ENCODE measurements at regions of chr9 and their contacts with region 1.

Region 1: DNA sequence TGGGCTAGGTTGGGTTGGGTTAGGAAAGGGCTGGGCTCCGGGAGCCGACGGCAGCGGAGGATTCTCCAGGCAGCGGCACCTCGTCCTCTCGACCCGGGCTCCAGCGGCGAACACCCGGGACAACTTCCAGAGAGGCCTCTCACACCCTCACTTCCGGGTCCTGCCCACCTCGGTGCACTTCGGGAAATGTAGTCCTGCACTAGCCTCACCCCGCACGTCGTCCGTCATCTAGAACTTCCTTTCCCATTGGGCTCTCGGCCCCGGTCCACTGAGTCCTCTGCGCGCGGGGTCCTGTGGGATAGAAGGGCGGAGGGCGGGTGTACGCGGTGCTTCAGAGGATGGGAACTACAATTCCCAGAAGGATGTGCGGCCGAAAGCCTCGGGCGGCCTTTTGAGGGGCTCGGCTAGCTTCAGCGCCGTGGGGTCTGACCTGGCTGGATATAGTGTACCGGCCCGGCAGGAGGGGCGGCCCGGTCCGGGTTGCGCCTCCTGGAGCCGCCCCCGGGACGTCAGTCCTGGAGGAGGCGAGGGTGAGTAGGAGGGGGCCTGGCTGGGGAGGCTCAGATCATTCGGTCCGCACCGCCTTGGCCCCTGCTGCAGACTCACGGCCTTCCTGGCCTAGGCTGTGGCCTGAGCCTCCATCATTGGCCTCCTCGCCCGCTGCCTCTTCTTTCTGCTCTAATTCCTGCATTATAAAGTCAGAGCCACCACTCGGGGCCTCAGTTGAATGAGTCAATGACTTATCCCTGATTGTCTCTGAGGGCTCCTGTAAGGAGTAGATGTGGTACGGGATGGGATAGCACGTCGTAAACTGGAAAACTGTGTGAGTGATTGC is at the starts of genes ERP44 and INVS:
- DNase-seq: peak; percentile 98
- H3K4me3 Mint-ChIP-seq: peak within 1 kb of the TSS; percentile 98
- H3K27ac Mint-ChIP-seq: peak within 1 kb of the TSS; percentile 83
- H3K4me1 Mint-ChIP-seq: peaks cover 32% of the 10 kb centered on the region
- H3K27me3 Mint-ChIP-seq: no peaks in the 10 kb centered on the region
- total RNA-seq, gene ERP44: 14.5 to 14.8 TPM
- total RNA-seq, gene INVS: 10.5 to 12.1 TPM

Region 2: DNA sequence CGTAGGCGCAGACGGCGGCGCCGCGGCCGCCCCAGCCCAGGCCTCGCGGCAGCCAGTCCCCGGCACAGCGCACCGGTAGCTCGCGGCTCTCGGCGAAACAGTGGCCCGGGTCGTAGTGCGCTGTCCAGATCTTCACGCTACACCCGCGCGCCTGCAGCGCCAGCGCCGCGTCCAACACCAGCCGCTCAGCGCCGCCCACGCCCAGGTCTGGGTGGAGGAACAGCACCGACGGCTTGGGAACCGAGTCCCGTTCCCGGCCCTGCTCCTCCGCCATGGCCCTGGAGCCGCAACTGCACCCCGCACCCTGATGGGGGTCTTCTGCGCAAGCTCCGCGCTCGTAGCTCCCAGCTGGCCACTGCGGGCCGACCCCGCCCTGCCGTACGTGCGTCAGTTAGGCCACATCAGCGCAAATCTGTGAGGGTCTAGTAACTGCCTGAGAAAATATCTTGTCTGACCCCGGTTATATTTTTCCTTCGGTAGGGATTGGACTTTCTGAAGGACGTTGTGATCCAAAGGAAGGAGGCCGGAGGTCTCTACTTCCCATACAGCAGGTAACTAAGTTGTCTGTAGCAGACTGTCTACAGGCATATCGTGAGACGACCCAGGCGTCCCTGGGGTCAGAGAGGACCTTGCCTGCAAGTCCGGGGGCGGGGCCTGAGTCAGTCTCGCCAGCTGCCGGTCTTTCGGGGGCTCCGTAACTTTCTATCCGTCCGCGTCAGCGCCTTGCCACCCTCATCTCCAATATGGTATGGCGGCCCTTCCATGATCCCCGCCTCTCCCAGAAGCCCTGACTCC is 877.3 kb before region 1 on chr9 and contains the starts of genes ALG2 and SEC61B:
- CTCF ChIA-PET with region 1: no interaction called
- POLR2A ChIA-PET with region 1: no interaction called
- intact Hi-C with region 1: loop called (anchors 1 kb)
- DNase-seq: peak; percentile 94
- H3K4me3 Mint-ChIP-seq: peak within 1 kb of the TSS; percentile 97
- H3K27ac Mint-ChIP-seq: peak within 1 kb of the TSS; percentile 95
- H3K4me1 Mint-ChIP-seq: peaks cover 66% of the 10 kb centered on the region
- H3K27me3 Mint-ChIP-seq: no peaks in the 10 kb centered on the region
- total RNA-seq, gene ALG2: 18.6 to 20.8 TPM
- total RNA-seq, gene SEC61B: 161 to 166 TPM

Region 3: GRCh38 chr9:99807276-99807852 is 291.7 kb before region 1 on chr9:
- CTCF ChIA-PET with region 1: no interaction called
- POLR2A ChIA-PET with region 1: no interaction called
- intact Hi-C with region 1: no loop called
- DNase-seq: peak; percentile 69
- H3K4me3 Mint-ChIP-seq: no peak overlapping the region
- H3K27ac Mint-ChIP-seq: no peak overlapping the region
- H3K4me1 Mint-ChIP-seq: peaks cover 25% of the 10 kb centered on the region
- H3K27me3 Mint-ChIP-seq: peaks cover 6% of the 10 kb centered on the region

Region 4: DNA sequence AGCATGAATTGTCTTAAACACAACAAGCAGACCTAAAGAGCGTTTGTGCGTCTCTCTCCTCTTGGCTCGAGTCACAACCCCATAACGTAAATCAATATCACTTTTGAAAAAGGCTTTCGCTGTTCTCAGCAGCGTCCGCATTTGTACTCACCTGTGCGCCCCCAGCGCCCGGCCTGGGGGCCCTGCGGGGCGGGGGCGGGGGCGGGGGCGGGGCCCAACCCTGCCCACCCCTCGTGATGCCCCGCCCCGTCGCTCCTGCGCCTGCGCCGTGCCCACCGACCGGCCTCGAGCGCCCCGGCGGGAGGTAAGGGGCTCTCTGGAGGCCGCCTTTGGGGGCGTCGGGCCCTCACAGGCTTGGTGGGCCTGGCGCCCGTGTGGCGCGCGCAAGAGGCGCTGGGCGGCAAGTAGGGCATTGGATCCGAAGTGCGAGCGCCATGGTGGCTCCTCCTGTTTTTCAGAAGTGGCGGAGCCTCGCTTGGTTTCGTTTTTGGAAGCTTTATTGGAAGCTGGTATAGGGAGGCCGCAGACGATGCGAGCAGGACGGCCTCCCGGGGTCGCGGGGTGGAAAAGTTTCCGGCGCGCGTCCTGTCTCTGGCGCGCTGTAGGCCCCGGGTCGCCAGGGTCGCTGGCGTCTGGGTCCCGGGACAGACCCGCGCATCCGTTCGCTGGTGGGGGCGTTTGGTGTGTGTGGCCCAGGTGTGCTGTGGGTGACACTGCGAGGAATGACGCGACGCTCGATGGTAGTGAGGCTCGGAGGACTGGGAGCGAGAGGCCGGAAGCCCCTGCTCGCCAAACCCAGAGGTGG is 192.5 kb before region 1 on chr9 and contains the start of gene STX17:
- CTCF ChIA-PET with region 1: no interaction called
- POLR2A ChIA-PET with region 1: no interaction called
- intact Hi-C with region 1: loop called (anchors 5 kb)
- DNase-seq: peak; percentile 82
- H3K4me3 Mint-ChIP-seq: peak within 1 kb of the TSS; percentile 96
- H3K27ac Mint-ChIP-seq: peak within 1 kb of the TSS; percentile 95
- H3K4me1 Mint-ChIP-seq: peaks cover 20% of the 10 kb centered on the region
- H3K27me3 Mint-ChIP-seq: peaks cover 3% of the 10 kb centered on the region
- total RNA-seq, gene STX17: 30.6 to 36.1 TPM

Region 5: DNA sequence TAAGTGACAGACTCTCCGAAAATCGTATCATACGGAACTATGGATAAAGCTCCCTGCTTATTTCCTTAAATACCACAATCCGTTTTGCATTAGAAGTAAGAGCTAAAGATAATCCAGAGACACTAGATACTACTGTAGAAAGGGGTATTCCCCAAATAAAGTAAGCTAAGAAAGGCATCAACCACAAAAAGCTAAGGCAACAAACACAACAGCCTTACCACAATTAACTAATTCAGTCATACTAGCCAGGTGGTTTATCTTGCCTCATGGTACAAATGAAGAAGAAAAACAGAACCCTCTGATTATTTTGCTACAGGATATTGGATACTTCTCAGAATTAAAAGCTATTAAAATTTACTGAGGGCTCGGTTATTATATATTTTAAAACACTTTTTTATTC is 14.4 kb before region 1 on chr9:
- CTCF ChIA-PET with region 1: interaction called, 4 read pairs
- POLR2A ChIA-PET with region 1: interaction called, 3 read pairs
- intact Hi-C with region 1: loop called (anchors 1 kb)
- DNase-seq: no peak
- H3K4me3 Mint-ChIP-seq: no peak overlapping the region
- H3K27ac Mint-ChIP-seq: no peak overlapping the region
- H3K4me1 Mint-ChIP-seq: peaks cover 70% of the 10 kb centered on the region
- H3K27me3 Mint-ChIP-seq: no peaks in the 10 kb centered on the region

Region 6: GRCh38 chr9:100111235-100111634 is 12.1 kb after region 1 on chr9:
- CTCF ChIA-PET with region 1: no interaction called
- POLR2A ChIA-PET with region 1: no interaction called
- intact Hi-C with region 1: no loop called
- DNase-seq: no peak
- H3K4me3 Mint-ChIP-seq: no peak overlapping the region
- H3K27ac Mint-ChIP-seq: no peak overlapping the region
- H3K4me1 Mint-ChIP-seq: peaks cover 2% of the 10 kb centered on the region
- H3K27me3 Mint-ChIP-seq: no peaks in the 10 kb centered on the region

Region 7: DNA sequence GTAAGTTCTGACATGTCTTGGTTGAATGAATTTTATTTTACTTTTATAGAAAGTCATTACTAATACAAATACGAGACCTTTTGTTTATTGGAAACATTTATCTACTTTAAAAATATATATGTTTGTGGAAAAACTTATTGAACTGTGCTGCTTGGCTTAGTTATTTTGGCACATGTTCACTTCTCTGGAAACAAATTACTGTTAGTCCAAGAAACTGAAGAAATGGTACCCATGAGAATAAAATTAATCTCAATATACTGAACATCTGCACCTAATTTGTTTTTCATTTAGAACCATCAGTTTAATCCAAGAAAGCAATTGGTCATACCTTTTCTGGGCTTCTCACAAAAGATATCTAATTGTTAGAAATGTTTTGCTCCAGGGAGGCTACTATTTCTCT is 32.1 kb after region 1 on chr9:
- CTCF ChIA-PET with region 1: no interaction called
- POLR2A ChIA-PET with region 1: no interaction called
- intact Hi-C with region 1: no loop called
- DNase-seq: no peak
- H3K4me3 Mint-ChIP-seq: no peak overlapping the region
- H3K27ac Mint-ChIP-seq: no peak overlapping the region
- H3K4me1 Mint-ChIP-seq: peaks cover 4% of the 10 kb centered on the region
- H3K27me3 Mint-ChIP-seq: no peaks in the 10 kb centered on the region

Region 8: GRCh38 chr9:100216178-100216787 is 117.2 kb after region 1 on chr9:
- CTCF ChIA-PET with region 1: no interaction called
- POLR2A ChIA-PET with region 1: no interaction called
- intact Hi-C with region 1: loop called (anchors 5 kb)
- DNase-seq: peak; percentile 76
- H3K4me3 Mint-ChIP-seq: no peak overlapping the region
- H3K27ac Mint-ChIP-seq: no peak overlapping the region
- H3K4me1 Mint-ChIP-seq: peaks cover 2% of the 10 kb centered on the region
- H3K27me3 Mint-ChIP-seq: no peaks in the 10 kb centered on the region

Region 9: GRCh38 chr9:100322954-100323536 is 223.9 kb after region 1 on chr9:
- CTCF ChIA-PET with region 1: interaction called, 3 read pairs
- POLR2A ChIA-PET with region 1: no interaction called
- intact Hi-C with region 1: loop called (anchors 10 kb)
- DNase-seq: peak; percentile 24
- H3K4me3 Mint-ChIP-seq: no peak overlapping the region
- H3K27ac Mint-ChIP-seq: no peak overlapping the region
- H3K4me1 Mint-ChIP-seq: peaks cover 10% of the 10 kb centered on the region
- H3K27me3 Mint-ChIP-seq: no peaks in the 10 kb centered on the region

Region 10: DNA sequence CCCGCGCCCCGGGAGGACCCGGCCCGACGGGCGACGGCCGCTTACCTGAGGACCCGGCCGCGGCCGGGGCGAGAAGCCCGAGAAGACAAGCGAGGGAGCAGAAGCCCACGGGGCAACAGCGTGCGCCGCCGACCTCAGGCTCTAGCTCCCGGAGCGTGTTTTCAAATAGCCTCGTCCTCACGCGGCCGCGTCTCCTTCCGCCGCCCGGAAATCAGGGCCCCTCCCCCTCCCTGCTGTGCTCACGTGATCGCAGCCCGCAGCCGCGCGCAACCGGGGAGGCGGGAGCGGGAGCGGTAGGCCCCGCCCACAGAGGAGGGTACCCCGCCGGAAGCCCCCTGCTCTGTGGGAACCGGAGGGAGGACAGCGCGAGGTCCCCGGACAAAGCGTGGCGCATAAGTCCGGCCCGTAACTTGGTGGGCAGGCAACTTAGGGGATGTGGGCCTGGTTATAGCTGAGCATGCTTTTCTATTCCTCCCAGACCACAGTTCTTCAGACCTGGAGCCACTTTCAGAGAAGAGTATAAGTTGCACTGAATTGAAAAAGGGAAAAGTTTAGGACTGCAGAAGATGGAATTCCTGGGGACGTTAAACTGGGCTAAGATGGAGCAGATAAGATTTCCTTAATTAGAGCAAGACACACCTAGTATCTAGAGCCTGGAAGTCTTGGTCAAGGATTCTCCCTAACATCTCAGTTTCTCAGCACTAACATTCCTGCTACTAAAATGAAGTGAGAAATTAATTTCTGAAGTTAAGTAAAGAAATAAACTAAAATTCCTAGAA is 253.8 kb after region 1 on chr9 and contains the start of gene TEX10:
- CTCF ChIA-PET with region 1: no interaction called
- POLR2A ChIA-PET with region 1: no interaction called
- intact Hi-C with region 1: loop called (anchors 2 kb)
- DNase-seq: peak; percentile 92
- H3K4me3 Mint-ChIP-seq: peak within 1 kb of the TSS; percentile 87
- H3K27ac Mint-ChIP-seq: peak within 1 kb of the TSS; percentile 69
- H3K4me1 Mint-ChIP-seq: peaks cover 44% of the 10 kb centered on the region
- H3K27me3 Mint-ChIP-seq: no peaks in the 10 kb centered on the region
- total RNA-seq, gene TEX10: 20.3 to 20.7 TPM